ENCODE measurements at regions of chrX and their contacts with region 1.

Region 1: DNA sequence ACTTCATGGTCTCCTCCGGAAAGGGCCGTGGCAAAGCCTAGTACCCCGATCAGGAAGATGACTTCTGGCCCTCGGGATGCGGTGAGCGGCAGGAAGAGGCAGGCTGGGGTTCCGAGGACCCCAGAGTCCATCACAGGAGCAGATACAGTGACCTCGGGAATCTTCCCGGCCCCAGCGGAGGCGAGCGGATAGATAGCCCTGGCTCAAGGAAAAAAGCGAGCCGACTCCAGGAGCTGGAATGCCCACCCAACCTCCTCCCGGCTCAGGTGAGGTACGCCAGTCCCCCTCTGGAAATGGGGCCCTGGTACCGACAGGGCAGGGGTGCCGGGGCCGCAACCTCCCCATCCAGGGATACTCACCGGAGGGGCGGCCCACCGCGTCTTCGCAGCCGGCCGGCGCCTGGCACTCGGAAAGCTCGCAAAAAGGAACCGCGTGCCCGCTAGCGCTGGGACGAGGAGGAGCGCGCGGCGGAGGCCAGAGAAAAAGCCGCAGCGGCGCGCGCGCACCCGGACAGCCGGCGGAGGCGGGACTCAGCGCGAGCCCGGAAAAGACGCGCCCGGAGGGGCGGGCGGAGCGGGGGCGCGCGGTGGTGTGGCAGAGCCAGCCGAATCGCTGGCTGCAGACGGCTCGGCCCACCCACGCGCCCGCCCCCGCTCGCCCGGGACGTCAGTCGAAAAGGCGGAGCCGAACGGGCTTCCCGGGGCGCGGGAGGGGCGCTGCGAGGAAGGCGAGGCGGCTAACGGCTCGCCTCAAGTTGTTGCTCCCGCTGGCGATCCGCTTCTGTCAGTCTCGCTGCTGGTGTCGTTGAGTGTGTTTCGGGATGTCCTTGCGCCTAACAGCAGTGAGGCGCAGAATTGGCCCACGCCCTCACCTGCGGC is at the start of gene ACSL4:
- DNase-seq: peak; percentile 82
- H3K4me3 Mint-ChIP-seq: peak within 1 kb of the TSS; percentile 90
- H3K27ac Mint-ChIP-seq: peak within 1 kb of the TSS; percentile 81
- H3K4me1 Mint-ChIP-seq: peaks cover 17% of the 10 kb centered on the region
- H3K27me3 Mint-ChIP-seq: peaks cover 26% of the 10 kb centered on the region
- CTCF ChIP-seq: no peak
- total RNA-seq, gene ACSL4: 48.0 and 70.1 TPM in 2 replicates

Region 2: DNA sequence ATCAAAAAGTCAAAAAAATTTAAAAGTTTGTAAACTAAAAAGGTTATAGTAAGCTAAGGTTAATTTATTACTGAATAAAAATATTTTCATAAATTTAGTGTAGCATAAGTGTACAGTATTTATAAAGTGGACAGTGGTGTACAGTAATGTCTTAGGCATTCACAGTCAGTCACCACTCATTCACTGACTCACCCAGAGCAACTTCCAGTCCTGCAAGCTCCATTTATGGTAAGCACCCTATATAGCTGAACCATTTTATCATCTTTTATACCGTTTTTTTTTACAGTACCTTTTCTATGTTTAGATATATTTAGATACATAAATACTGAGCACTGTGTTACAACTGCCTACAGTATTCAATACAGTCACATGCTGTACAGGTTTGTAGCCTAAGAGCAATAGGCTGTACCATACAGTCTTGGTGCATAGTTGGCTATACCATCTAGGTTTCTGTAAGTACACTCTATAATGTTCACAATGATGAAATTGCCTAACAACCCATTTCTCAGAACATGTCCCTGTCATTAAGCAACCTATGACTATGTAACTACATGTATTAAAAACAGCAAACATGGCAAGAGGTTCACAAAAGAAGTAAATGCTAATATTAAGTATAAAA is 18.6 kb before region 1 on chrX:
- CTCF ChIA-PET with region 1: interaction called, 7 read pairs
- POLR2A ChIA-PET with region 1: interaction called, 47 read pairs
- intact Hi-C with region 1: no loop called
- DNase-seq: peak; percentile 61
- H3K4me3 Mint-ChIP-seq: no peak overlapping the region
- H3K27ac Mint-ChIP-seq: no peak overlapping the region
- H3K4me1 Mint-ChIP-seq: peaks cover 10% of the 10 kb centered on the region
- H3K27me3 Mint-ChIP-seq: no peaks in the 10 kb centered on the region
- CTCF ChIP-seq: no peak

Region 3: DNA sequence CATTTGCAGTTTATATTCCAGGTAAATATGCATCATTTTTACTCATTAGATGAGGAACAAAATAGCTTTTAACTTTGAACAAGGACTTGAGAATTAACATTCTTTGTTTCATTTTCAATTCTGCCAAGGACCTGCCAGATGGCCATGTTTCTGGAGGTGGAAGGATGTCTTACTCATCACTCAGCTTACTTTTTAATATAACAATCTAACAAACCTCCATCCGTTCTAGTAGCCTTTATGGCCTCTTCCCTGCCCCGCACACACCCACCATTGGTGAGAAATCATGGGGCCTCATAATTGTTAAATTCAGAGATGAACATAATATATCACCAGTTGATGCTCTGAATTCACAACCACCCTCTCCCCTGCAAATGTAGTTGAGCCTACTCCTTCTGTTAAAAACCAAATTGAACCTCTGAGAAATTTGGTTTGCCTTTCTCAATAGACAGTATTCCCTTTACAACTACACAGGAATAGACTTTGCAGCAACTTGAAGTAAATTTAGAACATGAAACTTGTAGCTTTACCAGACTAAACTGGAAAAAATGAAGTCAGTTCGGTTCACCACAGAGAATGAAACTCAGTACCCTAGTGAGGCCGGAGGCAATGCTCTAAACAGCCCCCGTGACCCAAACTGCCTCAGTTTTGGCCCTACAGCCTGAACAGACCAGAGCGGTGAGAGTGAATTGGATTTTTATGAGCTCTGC is 50.1 kb after region 1 on chrX:
- CTCF ChIA-PET with region 1: no interaction called
- POLR2A ChIA-PET with region 1: interaction called, 42 read pairs
- intact Hi-C with region 1: no loop called
- DNase-seq: no peak
- H3K4me3 Mint-ChIP-seq: peak overlapping the region; percentile 4
- H3K27ac Mint-ChIP-seq: no peak overlapping the region
- H3K4me1 Mint-ChIP-seq: peaks cover 11% of the 10 kb centered on the region
- H3K27me3 Mint-ChIP-seq: peaks cover 57% of the 10 kb centered on the region
- CTCF ChIP-seq: no peak

Region 4: DNA sequence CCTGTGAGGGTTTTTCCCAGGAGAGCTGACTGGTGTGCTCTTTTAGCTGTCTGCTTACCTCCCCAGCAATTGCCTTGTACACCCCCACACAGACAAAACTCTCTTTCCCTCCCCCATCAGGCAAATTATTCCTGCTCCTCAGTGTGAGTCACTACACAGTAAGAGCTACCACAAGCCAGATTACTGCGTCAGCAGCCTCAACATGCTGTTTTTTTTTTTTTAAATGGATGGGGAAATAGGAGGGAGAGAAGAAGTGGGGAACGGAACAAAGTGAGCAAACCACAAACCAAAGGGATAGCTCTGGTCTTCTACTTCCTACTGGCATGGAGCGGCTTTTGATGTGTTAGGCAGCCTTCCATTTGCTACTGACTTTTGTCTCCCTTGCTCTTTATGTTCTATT is 107.6 kb after region 1 on chrX:
- CTCF ChIA-PET with region 1: interaction called, 3 read pairs
- POLR2A ChIA-PET with region 1: interaction called, 38 read pairs
- intact Hi-C with region 1: loop called (anchors 5 kb)
- DNase-seq: peak; percentile 93
- H3K4me3 Mint-ChIP-seq: no peak overlapping the region
- H3K27ac Mint-ChIP-seq: no peak overlapping the region
- H3K4me1 Mint-ChIP-seq: no peaks in the 10 kb centered on the region
- H3K27me3 Mint-ChIP-seq: peaks cover 13% of the 10 kb centered on the region
- CTCF ChIP-seq: no peak

Region 5: GRCh38 chrX:109856974-109857373 is 124.0 kb after region 1 on chrX:
- CTCF ChIA-PET with region 1: interaction called, 9 read pairs
- POLR2A ChIA-PET with region 1: interaction called, 33 read pairs
- intact Hi-C with region 1: loop called (anchors 1 kb)
- DNase-seq: peak; percentile 60
- H3K4me3 Mint-ChIP-seq: no peak overlapping the region
- H3K27ac Mint-ChIP-seq: no peak overlapping the region
- H3K4me1 Mint-ChIP-seq: peaks cover 9% of the 10 kb centered on the region
- H3K27me3 Mint-ChIP-seq: peaks cover 26% of the 10 kb centered on the region
- CTCF ChIP-seq: peak; percentile 83

Region 6: GRCh38 chrX:110210417-110211139 is 477.6 kb after region 1 on chrX:
- CTCF ChIA-PET with region 1: no interaction called
- POLR2A ChIA-PET with region 1: no interaction called
- intact Hi-C with region 1: no loop called
- DNase-seq: peak; percentile 61
- H3K4me3 Mint-ChIP-seq: peak overlapping the region; percentile 44
- H3K27ac Mint-ChIP-seq: peak overlapping the region; percentile 85
- H3K4me1 Mint-ChIP-seq: peaks cover 14% of the 10 kb centered on the region
- H3K27me3 Mint-ChIP-seq: peaks cover 57% of the 10 kb centered on the region
- CTCF ChIP-seq: no peak

Region 7: DNA sequence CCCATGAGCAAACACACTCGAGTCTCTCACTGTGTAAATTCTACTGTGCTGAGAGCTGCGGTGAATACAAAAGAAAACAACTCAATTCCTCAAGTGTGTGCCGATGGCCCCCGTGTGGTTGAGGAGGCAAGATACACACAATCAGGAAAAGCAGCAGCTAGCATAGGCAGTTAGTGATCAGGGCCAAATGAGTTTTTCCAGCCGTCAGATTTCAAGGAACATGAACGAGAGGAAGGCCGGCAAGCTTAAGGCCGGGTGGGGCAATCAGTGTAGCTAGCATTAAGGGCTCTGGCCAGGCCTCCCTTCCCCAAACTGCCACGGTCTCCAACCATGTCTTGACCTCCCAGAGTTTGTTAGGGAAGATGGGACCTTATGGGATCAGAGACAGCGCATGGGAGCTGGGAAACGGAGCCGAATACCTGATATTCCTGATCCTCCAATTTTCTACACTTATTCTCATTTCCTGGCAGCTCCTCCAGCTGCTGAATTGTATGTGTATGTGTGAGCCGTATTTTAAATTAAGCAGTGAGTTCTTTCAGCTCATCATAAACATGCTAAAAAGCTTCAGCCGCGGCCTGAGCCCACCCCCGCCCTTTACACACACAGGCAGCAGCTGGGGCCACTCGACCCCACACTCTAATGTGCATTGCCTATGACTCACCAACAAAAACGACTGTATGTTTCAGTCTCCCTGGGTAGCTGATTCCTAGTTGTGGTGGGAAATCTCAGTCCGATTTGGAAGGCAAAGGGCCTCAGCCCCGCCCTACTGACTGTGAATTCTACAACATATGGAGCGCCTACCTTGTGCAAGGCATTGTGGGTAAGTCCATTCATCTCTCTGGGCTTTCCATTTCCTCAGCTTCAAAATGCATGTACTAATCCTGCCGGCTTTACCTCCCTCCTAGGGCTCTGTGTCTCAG is 685.6 kb after region 1 on chrX:
- CTCF ChIA-PET with region 1: no interaction called
- POLR2A ChIA-PET with region 1: no interaction called
- intact Hi-C with region 1: no loop called
- DNase-seq: no peak
- H3K4me3 Mint-ChIP-seq: no peak overlapping the region
- H3K27ac Mint-ChIP-seq: no peak overlapping the region
- H3K4me1 Mint-ChIP-seq: peaks cover 7% of the 10 kb centered on the region
- H3K27me3 Mint-ChIP-seq: peaks cover 89% of the 10 kb centered on the region
- CTCF ChIP-seq: no peak